ENCODE measurements at regions of chr3 and their contacts with region 1.

Region 1: DNA sequence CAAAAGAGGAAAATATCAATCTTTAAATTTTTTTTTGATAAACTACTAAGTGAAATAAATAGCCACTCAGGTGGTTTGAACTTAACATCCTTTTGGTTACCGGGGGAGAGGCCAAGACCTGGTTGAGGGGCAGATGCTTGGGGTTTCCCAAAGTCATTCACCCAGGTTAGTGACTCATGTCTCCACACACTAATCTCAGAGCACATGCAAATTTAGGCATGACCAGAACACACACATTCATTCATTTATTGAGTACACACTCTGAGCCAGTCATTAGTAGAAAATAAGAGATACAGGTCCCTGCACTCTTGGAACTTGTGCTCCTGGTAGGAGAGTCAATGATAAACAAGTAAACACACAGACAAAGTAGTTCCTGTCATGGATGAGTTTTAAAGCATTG is 7.3 kb downstream of the ILDR1 start:
- DNase-seq: no peak
- ATAC-seq: peak; percentile 99
- H3K4me3 Mint-ChIP-seq: peak overlapping the region; percentile 5
- H3K27ac Mint-ChIP-seq: peak overlapping the region; percentile 56
- H3K4me1 Mint-ChIP-seq: peaks cover 44% of the 10 kb centered on the region
- H3K27me3 Mint-ChIP-seq: no peaks in the 10 kb centered on the region
- CTCF ChIP-seq: no peak

Region 2: DNA sequence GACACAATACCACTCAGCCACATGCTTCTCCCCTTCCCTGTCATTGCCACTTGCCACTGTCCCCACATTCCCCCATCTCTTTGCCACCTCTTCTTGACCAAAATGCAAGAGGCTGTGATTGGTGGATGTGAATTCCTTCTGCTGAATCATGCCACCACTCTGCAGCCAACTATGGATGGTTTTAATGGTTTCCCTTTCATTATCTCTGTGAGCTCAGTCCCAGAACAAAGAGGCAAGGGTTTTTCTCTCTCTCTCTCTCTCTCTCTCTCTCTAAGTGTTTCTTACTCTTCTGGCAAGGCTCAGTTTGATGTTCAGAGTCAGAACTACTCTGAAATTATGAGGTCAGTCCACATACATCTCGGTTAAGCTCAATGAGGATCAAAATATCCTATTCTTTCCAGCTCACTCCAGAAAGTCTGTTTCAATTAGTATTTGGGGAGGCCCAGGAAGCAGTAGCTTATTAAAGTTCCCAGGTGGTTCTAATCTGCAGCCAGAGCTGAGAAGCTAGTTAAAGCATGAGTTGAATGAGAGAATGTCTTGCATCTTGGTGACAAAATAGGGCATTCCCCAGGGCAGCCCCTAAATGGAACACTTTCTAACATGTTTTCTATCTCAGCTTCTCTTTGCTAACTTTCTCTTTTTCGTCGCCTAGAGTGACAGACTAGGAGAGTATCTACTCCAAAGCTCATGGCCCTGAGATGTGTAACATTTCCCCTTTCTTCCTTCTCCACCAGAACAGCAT is 15.8 kb after region 1 on chr3:
- CTCF ChIA-PET with region 1: no interaction called
- POLR2A ChIA-PET with region 1: interaction called, 6 read pairs
- intact Hi-C with region 1: loop called (anchors 2 kb)
- DNase-seq: no peak
- ATAC-seq: peak; percentile 81
- H3K4me3 Mint-ChIP-seq: peak overlapping the region; percentile 60
- H3K27ac Mint-ChIP-seq: peak overlapping the region; percentile 85
- H3K4me1 Mint-ChIP-seq: peaks cover 39% of the 10 kb centered on the region
- H3K27me3 Mint-ChIP-seq: no peaks in the 10 kb centered on the region
- CTCF ChIP-seq: no peak

Region 3: DNA sequence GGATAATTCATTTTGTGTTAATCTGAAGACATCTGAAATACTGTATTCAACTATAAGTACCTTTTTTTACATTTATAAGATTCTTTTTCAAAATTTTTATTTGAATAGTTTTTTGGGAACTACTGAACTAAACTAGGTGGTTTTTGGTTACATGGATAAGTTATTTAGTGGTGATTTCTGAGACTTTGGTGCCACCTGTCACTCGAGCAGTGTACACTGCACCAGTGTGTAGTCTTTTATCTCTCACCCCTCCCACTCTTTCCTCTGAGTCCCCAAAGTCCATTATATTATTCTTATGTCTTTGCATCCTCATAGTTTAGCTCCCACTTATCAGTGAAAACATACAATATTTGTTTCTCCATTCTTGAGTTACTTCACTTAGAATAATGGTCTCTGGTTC is 98.0 kb after region 1 on chr3:
- CTCF ChIA-PET with region 1: no interaction called
- POLR2A ChIA-PET with region 1: no interaction called
- intact Hi-C with region 1: no loop called
- DNase-seq: no peak
- ATAC-seq: no peak
- H3K4me3 Mint-ChIP-seq: no peak overlapping the region
- H3K27ac Mint-ChIP-seq: no peak overlapping the region
- H3K4me1 Mint-ChIP-seq: peaks cover 9% of the 10 kb centered on the region
- H3K27me3 Mint-ChIP-seq: no peaks in the 10 kb centered on the region
- CTCF ChIP-seq: no peak

Measured in activated B cell treated with CpG ODN at 0.5 μM for 24 hours (primary cell).